ENCODE measurements at regions of chr3 and their contacts with region 1.

Region 1: DNA sequence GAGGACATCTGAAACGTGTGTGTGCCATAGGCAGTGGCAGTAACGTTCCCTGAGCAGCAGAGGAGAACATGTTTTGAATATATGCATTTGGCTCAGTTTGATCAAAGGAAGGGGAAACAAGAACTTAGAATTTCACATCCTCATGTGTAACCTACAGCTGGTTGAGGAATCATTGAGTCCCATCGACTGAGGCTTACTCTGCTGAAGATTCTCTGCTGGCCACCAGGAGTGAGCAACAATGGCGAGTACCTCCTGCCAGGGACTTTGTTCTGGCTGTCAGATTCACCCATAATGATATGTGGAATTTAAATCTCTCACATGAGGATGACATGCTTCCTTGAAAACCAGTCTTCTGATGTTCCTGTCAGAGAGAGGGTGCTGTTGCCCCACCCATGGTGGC is 21.3 kb downstream of the GORASP1 start:
- DNase-seq: peak; percentile 91
- H3K4me3 ChIP-seq: peak overlapping the region; percentile 30
- H3K27ac ChIP-seq: peak overlapping the region; percentile 84
- H3K4me1 ChIP-seq: peaks cover 29% of the 10 kb centered on the region
- CTCF ChIP-seq: peak; percentile 64

Region 2: GRCh38 chr3:39146984-39147591 is 60.9 kb after region 1 on chr3:
- CTCF ChIA-PET with region 1: interaction called, 3 read pairs
- POLR2A ChIA-PET with region 1: interaction called, 3 read pairs
- intact Hi-C with region 1: loop called (anchors 5 kb)
- DNase-seq: peak; percentile 59
- H3K4me3 ChIP-seq: peak overlapping the region; percentile 79
- H3K27ac ChIP-seq: peak overlapping the region; percentile 90
- H3K4me1 ChIP-seq: peaks cover 72% of the 10 kb centered on the region
- CTCF ChIP-seq: no peak

Region 3: GRCh38 chr3:39169712-39170111 is 83.6 kb after region 1 on chr3:
- CTCF ChIA-PET with region 1: interaction called, 3 read pairs
- POLR2A ChIA-PET with region 1: interaction called, 10 read pairs
- intact Hi-C with region 1: no loop called
- DNase-seq: no peak
- H3K4me3 ChIP-seq: no peak overlapping the region
- H3K27ac ChIP-seq: no peak overlapping the region
- H3K4me1 ChIP-seq: no peaks in the 10 kb centered on the region
- CTCF ChIP-seq: no peak

Region 4: GRCh38 chr3:39216176-39216790 is 130.1 kb after region 1 on chr3:
- CTCF ChIA-PET with region 1: no interaction called
- POLR2A ChIA-PET with region 1: no interaction called
- intact Hi-C with region 1: no loop called
- DNase-seq: peak; percentile 81
- H3K4me3 ChIP-seq: peak overlapping the region; percentile 18
- H3K27ac ChIP-seq: peak overlapping the region; percentile 14
- H3K4me1 ChIP-seq: peaks cover 23% of the 10 kb centered on the region
- CTCF ChIP-seq: no peak

Region 5: DNA sequence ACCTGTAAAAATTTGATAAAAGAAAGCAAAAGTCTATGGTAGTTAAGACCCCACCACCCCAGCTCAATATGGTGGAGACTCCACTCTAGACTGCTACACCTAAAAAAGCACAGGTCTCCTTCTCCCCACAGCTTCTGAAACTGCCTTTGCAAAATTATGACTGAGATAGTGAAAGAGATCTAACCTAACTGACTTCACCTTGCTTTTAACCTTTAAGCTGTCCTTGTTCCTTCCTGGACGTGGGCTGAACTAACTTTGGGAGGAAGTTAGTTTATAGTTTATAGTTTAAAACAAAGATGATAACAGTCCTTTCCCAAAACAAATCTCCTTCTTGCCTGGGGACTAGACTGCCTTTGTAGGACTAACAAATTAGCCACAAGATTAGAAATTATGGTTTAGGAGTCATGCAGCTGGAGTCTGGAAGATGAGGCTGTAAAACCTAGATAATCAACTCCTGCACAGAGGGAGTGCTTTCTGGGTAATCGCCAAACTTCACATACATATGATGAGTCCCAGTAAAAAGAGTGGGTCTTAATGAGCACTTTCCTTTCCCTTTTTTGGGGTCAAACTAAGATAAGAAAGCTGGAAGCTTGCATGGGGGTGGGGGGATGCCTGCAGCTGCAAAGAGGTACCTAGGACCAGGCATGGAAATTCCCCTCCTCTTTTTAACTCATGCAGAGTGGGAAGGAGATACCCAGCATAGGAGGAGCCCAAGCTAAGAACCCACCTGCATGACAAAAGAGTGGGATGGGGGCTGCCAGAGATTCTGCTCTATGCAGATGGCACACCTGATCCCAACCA is 260.8 kb after region 1 on chr3:
- CTCF ChIA-PET with region 1: no interaction called
- POLR2A ChIA-PET with region 1: no interaction called
- intact Hi-C with region 1: no loop called
- DNase-seq: no peak
- H3K4me3 ChIP-seq: no peak overlapping the region
- H3K27ac ChIP-seq: no peak overlapping the region
- H3K4me1 ChIP-seq: no peaks in the 10 kb centered on the region
- CTCF ChIP-seq: no peak